ENCODE measurements at regions of chr2 and their contacts with region 1.

Region 1: DNA sequence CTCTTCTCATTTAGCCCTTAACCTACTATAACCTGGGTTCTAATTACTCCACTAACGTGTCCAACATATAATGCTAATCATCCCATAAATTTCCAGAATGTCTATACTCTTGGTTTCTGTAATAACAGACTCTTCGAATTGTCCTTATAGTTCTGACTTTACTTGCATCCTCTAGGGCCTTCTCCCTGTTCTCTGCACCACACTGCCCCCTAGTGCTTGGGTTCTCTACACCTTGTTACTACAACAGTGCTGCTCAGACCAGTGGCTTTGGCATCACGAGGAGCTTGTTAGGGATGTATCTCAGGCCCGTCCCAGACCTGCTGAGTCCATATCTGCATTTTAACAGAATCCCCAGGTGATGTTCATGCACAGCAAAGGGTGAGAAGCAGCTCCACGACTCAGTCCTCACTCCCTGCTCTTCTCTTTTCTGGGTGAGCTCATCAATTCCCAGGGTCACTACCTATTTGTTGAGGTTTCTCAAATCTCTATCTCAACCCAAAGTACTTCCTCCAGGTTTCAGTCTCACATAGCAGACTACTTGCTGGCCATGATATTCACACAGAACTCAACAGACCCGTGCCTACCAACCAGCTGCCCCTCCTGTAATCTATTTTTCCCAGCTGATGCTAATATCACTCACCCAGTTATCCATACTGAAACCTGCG is 14.5 kb upstream of the DDX1 start:
- DNase-seq: peak; percentile 74 to 93 (median 86)
- ATAC-seq: peak; percentile 99
- H3K4me3 ChIP-seq: no peak overlapping the region
- H3K4me3 Mint-ChIP-seq: no peak overlapping the region
- H3K27ac ChIP-seq: no peak overlapping the region
- H3K27ac Mint-ChIP-seq: no peak overlapping the region
- H3K4me1 ChIP-seq: no peaks in the 10 kb centered on the region
- H3K4me1 Mint-ChIP-seq: no peaks in the 10 kb centered on the region
- H3K27me3 ChIP-seq: no peaks in the 10 kb centered on the region
- H3K27me3 Mint-ChIP-seq: peaks cover 5% of the 10 kb centered on the region
- CTCF ChIP-seq: peak; percentile 72

Region 2: DNA sequence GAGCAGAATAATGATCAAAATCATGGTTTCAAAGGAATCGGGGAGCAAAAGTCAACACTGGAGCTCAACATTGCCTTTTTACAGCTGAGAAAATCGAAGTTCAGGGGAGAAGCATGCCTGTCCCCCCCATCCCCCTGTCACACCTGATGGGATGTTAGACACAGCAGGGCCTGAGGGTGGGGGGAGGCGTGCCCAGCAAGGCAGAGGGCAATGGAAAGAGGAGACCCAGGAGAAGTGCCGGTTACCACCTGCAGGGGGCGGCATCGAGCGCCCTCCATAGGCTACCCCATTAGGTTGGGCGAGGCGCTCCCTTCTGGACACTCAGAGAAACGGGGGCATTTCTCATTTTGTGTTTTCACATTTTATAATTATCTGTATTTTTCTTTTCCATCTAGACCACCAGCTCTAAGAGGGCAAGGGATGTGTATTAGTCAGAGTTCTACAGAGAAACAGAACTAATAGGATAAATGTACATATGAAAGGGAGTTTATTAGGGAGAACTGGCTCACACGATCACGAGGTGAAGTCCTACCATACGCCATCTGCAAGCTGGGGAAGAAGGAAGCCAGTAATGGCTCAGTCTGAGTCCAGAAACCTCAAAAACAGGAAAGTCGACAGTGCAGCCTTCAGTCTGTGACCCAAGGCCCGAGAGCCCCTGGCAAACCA is 673.4 kb before region 1 on chr2:
- CTCF ChIA-PET with region 1: no interaction called
- POLR2A ChIA-PET with region 1: no interaction called
- intact Hi-C with region 1: loop called in 1 of 2 experiments (anchors 5 kb)
- DNase-seq: peak in 7 of 9 experiments; percentile 3 to 45 (median 22)
- ATAC-seq: no peak
- H3K4me3 ChIP-seq: no peak overlapping the region
- H3K4me3 Mint-ChIP-seq: no peak overlapping the region
- H3K27ac ChIP-seq: no peak overlapping the region
- H3K27ac Mint-ChIP-seq: no peak overlapping the region
- H3K4me1 ChIP-seq: no peaks in the 10 kb centered on the region
- H3K4me1 Mint-ChIP-seq: no peaks in the 10 kb centered on the region
- H3K27me3 ChIP-seq: no peaks in the 10 kb centered on the region
- H3K27me3 Mint-ChIP-seq: no peaks in the 10 kb centered on the region
- CTCF ChIP-seq: peak; percentile 57

Region 3: DNA sequence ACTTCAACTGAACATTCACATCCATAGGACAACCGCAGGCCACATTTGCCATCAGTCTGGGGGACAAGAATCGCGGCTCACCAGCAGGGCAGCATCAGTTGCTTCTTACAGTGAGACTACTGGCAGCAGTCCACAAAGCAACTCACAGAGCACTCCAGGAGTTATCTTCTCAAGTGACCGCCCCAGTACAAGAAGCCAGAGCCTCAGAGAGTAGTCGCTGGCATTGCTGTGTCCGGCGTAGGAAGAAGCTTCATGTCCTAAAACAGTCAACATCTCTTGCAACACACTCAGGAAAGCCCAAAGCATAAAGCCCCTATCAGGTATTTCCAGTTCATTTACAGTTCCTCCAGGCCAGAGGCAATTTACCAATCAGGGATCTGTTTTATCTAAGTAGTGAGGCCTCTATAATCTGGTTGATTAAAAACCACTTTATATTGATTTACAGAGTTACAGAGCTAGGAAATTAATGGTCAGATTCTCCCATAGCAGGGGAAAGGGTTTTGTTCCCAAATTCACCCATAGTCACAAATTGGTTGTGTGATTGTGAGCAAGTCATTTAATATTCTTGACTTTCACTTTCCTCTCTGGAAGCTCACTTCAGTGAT is 193.4 kb before region 1 on chr2:
- CTCF ChIA-PET with region 1: no interaction called
- POLR2A ChIA-PET with region 1: no interaction called
- intact Hi-C with region 1: loop called in 1 of 2 experiments (anchors 10 kb)
- DNase-seq: no peak
- ATAC-seq: no peak
- H3K4me3 ChIP-seq: no peak overlapping the region
- H3K4me3 Mint-ChIP-seq: no peak overlapping the region
- H3K27ac ChIP-seq: no peak overlapping the region
- H3K27ac Mint-ChIP-seq: no peak overlapping the region
- H3K4me1 ChIP-seq: no peaks in the 10 kb centered on the region
- H3K4me1 Mint-ChIP-seq: no peaks in the 10 kb centered on the region
- H3K27me3 ChIP-seq: no peaks in the 10 kb centered on the region
- H3K27me3 Mint-ChIP-seq: no peaks in the 10 kb centered on the region
- CTCF ChIP-seq: no peak

Region 4: DNA sequence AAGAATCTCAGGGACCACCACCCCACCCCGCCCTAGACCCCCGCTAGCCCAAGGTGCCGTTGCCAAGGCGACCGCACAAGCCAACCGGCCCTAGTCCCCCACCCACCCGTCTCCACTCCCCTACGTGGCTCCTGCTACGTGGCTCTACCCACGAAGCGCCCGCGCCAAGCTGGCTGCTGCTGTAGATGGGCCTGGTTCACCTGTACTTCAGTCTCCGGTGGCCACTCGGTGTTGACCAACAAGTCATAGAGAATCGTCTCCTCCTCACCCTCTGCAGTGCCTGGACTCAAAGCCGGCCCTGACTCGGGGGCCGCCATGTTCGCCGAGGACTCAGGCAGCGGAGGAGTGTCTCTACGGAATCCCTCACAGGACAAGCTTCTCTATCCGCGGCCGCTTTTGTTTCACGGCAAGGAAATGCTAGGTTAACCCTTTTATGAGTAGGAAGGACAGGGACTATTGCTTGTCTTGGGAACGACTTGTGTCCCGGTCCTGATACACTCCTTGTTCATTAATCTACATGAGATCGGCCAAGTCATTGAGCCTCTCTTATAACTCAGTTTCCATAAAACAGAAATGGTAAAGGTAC is 16.1 kb before region 1 on chr2 and contains the start of gene NBAS:
- CTCF ChIA-PET with region 1: interaction called, 33 read pairs
- POLR2A ChIA-PET with region 1: interaction called, 5 read pairs
- intact Hi-C with region 1: loop called in 1 of 2 experiments (anchors 1 kb)
- DNase-seq: peak; percentile 61 to 87 (median 79)
- ATAC-seq: peak; percentile 88
- H3K4me3 ChIP-seq: peak within 1 kb of the TSS; percentile 53 to 85
- H3K4me3 Mint-ChIP-seq: peak within 1 kb of the TSS; percentile 100
- H3K27ac ChIP-seq: peak within 1 kb of the TSS; percentile 47 to 70
- H3K27ac Mint-ChIP-seq: peak within 1 kb of the TSS; percentile 98
- H3K4me1 ChIP-seq: peaks cover 9% of the 10 kb centered on the region
- H3K4me1 Mint-ChIP-seq: peaks cover 40% of the 10 kb centered on the region
- H3K27me3 ChIP-seq: no peaks in the 10 kb centered on the region
- H3K27me3 Mint-ChIP-seq: peaks cover 4% of the 10 kb centered on the region
- CTCF ChIP-seq: no peak
- total RNA-seq, gene NBAS: 16.9 to 17.6 TPM

Region 5: GRCh38 chr2:15591692-15592463 is 14.7 kb after region 1 on chr2 and contains the start of gene DDX1:
- CTCF ChIA-PET with region 1: interaction called, 57 read pairs
- POLR2A ChIA-PET with region 1: no interaction called
- intact Hi-C with region 1: no loop called
- DNase-seq: peak; percentile 71 to 92 (median 84)
- ATAC-seq: peak; percentile 96
- H3K4me3 ChIP-seq: peak within 1 kb of the TSS; percentile 92 to 95
- H3K4me3 Mint-ChIP-seq: peak within 1 kb of the TSS; percentile 95
- H3K27ac ChIP-seq: peak within 1 kb of the TSS; percentile 77 to 87
- H3K27ac Mint-ChIP-seq: peak within 1 kb of the TSS; percentile 91
- H3K4me1 ChIP-seq: peaks cover 20% of the 10 kb centered on the region
- H3K4me1 Mint-ChIP-seq: peaks cover 47% of the 10 kb centered on the region
- H3K27me3 ChIP-seq: no peaks in the 10 kb centered on the region
- H3K27me3 Mint-ChIP-seq: no peaks in the 10 kb centered on the region
- CTCF ChIP-seq: no peak
- total RNA-seq, gene DDX1: 49.7 to 58.0 TPM